Lower lobe of right lung (tissue), 2 donors: ENCODE measurements at regions of chr11 and their contacts with region 1.

Region 1: DNA sequence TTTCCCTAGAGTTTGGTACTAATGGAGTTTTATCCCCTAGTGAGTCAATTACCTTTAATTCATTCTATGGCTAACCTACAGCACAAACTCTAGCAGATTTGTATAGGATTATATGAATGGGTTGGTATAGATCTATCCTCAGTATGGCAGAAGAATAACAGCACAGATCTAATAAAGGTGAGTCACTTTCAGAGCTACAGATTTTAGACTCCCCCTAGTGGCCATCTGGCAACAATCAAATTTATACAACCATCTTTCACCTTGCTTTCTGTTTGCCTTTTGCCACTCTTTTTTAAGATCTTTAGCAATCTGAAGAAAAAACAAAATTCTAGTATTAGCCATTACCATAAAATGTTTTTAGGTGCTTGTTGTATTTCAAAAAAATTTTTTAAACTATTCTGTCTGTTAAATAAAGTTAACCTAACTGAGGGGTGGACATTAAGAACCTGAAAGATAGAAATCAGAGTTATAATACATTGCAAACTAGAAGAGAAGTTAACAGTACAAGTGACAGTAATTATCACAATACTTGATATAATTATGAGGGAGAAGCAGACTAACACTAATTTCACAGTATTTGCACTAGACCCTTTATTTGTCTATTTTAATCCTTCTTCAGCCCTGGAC is 25.8 kb downstream of the DDIAS start:
- DNase-seq: no peak
- ATAC-seq: peak; percentile 67 to 81
- H3K4me3 ChIP-seq: no peak overlapping the region
- H3K27ac ChIP-seq: no peak overlapping the region
- H3K4me1 ChIP-seq: no peaks in the 10 kb centered on the region
- H3K27me3 ChIP-seq: no peaks in the 10 kb centered on the region
- CTCF ChIP-seq: peak; percentile 76

Region 2: DNA sequence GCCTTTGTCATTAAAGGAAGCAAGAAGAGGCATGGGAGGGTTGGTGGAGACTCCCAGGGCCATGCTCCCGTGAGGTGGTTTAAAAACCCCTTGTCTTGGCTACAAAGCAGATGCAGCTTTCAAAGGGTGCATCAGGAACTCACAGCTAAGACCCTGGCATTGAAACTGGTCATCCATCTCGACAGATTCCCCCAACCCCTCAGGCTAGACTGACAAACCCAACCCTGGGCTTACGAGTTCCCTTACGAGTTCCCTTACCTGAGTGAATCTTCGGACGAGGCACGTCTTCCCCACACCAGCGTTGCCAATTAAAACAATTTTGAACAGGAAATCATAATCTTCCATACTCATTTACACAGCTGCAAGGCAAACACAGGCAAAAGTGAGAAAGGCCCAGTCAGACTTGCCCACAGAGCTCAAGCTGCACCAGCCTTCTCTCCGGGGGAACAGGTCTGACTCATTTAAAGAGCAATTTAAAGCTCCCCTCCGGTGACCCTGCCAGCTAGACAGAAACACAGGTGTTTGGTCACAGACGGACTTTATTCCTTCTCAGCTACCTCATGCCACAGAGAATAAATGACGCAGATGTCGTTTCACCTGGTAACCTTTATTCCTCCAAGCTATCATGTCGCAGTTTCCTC is 69.7 kb after region 1 on chr11:
- intact Hi-C with region 1: no loop called
- DNase-seq: no peak
- ATAC-seq: no peak
- H3K4me3 ChIP-seq: no peak overlapping the region
- H3K27ac ChIP-seq: no peak overlapping the region
- H3K4me1 ChIP-seq: peaks cover 10% of the 10 kb centered on the region
- H3K27me3 ChIP-seq: no peaks in the 10 kb centered on the region
- CTCF ChIP-seq: no peak

Region 3: GRCh38 chr11:83051760-83052671 is 124.6 kb after region 1 on chr11:
- intact Hi-C with region 1: loop called (anchors 10 kb)
- DNase-seq: no peak
- ATAC-seq: peak in 1 of 2 donors; percentile 40
- H3K4me3 ChIP-seq: no peak overlapping the region
- H3K27ac ChIP-seq: peak overlapping the region; percentile 8
- H3K4me1 ChIP-seq: peaks cover 40% of the 10 kb centered on the region
- H3K27me3 ChIP-seq: no peaks in the 10 kb centered on the region
- CTCF ChIP-seq: no peak

Region 4: GRCh38 chr11:83156150-83156995 is 229.0 kb after region 1 on chr11:
- intact Hi-C with region 1: no loop called
- DNase-seq: peak; percentile 99
- ATAC-seq: peak; percentile 94 to 97
- H3K4me3 ChIP-seq: peak overlapping the region; percentile 74
- H3K27ac ChIP-seq: peak overlapping the region; percentile 93
- H3K4me1 ChIP-seq: peaks cover 20% of the 10 kb centered on the region
- H3K27me3 ChIP-seq: no peaks in the 10 kb centered on the region
- CTCF ChIP-seq: no peak